ENCODE measurements at regions of chr6 and their contacts with region 1.

Region 1: DNA sequence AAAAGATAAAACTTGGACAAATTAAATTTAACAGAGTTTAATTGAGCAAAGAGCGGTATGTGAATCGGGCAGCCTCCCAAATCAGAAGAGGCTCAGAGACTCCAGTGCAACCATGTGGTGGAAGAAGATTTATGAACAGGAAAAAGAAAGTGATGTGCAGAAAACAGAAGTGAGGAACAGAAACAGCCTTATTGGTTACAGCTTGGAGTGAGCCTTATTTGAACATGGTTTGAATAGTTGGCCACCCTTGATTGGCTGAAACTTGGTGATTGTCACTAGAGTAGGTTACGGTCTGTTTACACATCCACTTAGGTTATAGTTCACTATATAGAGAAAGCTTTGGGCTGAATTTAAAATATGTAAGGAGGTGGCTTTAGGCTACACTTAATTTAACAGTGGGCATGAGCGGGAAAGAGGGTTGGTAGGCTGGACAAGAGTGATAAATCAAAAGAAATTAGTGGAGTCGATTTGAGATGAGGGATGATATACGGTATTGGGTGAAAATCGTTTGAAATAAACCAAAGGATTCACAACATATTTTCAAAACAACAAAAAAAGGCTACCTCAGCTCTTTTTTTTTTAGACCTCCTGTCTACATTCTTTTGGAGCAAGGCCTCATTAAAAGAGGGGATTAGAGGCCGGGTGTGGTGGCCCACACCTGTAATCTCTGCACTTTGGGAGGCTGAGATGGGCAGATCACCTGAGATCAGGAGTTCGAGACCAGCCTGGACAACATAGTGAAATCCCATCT is 84.3 kb upstream of the PREP start:
- DNase-seq: no peak
- H3K4me3 ChIP-seq: no peak overlapping the region
- H3K27ac ChIP-seq: no peak overlapping the region
- H3K4me1 ChIP-seq: no peaks in the 10 kb centered on the region; a peak in 1 of 7 replicates
- H3K27me3 ChIP-seq: no peaks in the 10 kb centered on the region
- CTCF ChIP-seq: no peak
- EP300 ChIP-seq: no peak
- POLR2A ChIP-seq: no peak
- RAD21 ChIP-seq: no peak

Region 2: GRCh38 chr6:105497549-105497948 is 10.3 kb after region 1 on chr6:
- CTCF ChIA-PET with region 1: interaction called, 10 read pairs
- POLR2A ChIA-PET with region 1: no interaction called
- DNase-seq: no peak
- H3K4me3 ChIP-seq: no peak overlapping the region
- H3K27ac ChIP-seq: no peak overlapping the region
- H3K4me1 ChIP-seq: no peaks in the 10 kb centered on the region; a peak in 1 of 7 replicates
- H3K27me3 ChIP-seq: no peaks in the 10 kb centered on the region
- CTCF ChIP-seq: no peak
- EP300 ChIP-seq: no peak
- POLR2A ChIP-seq: no peak
- RAD21 ChIP-seq: no peak

Measured in H1 (cell line).